PC-3 (cell line): ENCODE measurements at regions of chr16 and their contacts with region 1.

Region 1: DNA sequence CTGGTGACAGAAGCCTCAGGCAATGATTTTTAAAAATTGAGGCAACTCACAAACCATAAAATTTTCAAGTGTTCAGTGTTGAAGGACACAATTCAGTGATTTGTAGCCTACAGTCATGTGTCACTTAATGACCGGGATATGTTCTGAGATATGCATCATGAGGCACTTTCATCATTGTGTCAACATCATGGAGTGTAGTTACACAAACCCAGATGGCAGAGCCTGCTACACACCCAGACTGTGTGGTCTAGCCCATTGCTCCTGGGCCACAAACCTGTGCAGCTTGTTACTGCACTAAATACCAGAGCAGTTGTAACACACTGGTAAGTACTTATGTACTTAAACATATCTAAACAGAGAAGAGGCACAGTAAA is 1.6 kb downstream of the PRSS41 start:
- DNase-seq: peak; percentile 75
- ATAC-seq: peak; percentile 82
- H3K4me3 ChIP-seq: no peak overlapping the region
- H3K27ac ChIP-seq: peak overlapping the region; percentile 43
- H3K4me1 ChIP-seq: peaks cover 8% of the 10 kb centered on the region; the same call in 1 of the 2 replicates
- H3K27me3 ChIP-seq: no peaks in the 10 kb centered on the region
- CTCF ChIP-seq: no peak

Region 2: DNA sequence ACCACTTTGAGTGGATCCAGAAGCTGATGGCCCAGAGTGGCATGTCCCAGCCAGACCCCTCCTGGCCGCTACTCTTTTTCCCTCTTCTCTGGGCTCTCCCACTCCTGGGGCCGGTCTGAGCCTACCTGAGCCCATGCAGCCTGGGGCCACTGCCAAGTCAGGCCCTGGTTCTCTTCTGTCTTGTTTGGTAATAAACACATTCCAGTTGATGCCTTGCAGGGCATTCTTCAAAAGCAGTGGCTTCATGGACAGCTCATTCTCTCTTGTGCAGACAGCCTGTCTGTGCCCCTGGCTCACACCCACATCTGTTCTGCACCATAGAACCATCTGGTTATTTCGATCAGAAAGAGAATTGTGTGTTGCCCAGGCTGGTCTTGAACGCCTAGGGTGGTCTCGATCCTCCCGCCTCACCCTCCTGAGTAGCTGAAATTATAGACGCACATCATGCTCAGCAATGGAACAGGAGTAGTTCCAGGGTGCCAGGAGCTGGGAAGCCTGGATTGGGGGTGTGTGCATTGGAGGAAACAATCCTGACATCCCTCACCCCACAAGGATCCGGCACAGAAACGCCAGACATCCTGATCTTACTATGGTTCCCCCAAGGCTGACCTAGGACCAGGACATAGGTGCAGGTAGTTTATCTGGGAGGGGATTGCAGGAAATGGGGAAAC is 21.8 kb after region 1 on chr16:
- CTCF ChIA-PET with region 1: interaction called, 12 read pairs
- POLR2A ChIA-PET with region 1: no interaction called
- intact Hi-C with region 1: no loop called
- DNase-seq: no peak
- ATAC-seq: no peak
- H3K4me3 ChIP-seq: no peak overlapping the region
- H3K27ac ChIP-seq: no peak overlapping the region
- H3K4me1 ChIP-seq: no peaks in the 10 kb centered on the region
- H3K27me3 ChIP-seq: no peaks in the 10 kb centered on the region
- CTCF ChIP-seq: no peak